HCT116 (cell line): ENCODE measurements at regions of chr2 and their contacts with region 1.

Region 1: DNA sequence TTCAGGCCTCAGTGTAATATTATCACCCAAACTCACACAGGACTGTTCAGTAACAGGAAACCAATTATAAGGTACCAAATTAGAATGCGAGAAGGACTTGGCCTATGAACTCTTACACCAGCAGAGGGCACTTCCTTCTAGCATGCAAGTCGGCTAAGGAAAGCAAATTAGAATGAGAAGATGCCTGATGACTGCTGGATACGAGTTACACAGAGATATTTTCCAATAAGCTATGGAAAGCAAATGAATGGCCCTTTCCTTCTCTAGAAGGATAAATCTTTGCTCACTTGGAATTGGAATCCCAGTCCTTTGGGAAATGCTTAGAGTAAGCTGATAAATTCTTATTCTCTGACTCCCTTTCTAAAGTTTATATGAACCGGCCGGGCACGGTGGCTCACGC is 109.8 kb downstream of the AP1S3 start:
- DNase-seq: peak; percentile 79
- ATAC-seq: peak; percentile 73
- H3K4me3 ChIP-seq: no peak overlapping the region
- H3K27ac ChIP-seq: peak overlapping the region; percentile 93
- H3K4me1 ChIP-seq: peaks cover 43 to 64% of the 10 kb centered on the region in 2 experiments
- H3K27me3 ChIP-seq: no peaks in the 10 kb centered on the region
- CTCF ChIP-seq: peak; percentile 63 to 76 (median 70); a peak in 5 of 6 replicates
- POLR2A ChIP-seq: no peak
- RAD21 ChIP-seq: peak; percentile 86

Region 2: GRCh38 chr2:223692191-223692947 is 35.2 kb before region 1 on chr2:
- CTCF ChIA-PET with region 1: no interaction called
- POLR2A ChIA-PET with region 1: interaction called, 95 read pairs
- RAD21 ChIA-PET with region 1: no interaction called
- intact Hi-C with region 1: no loop called
- DNase-seq: peak; percentile 59
- ATAC-seq: peak; percentile 85
- H3K4me3 ChIP-seq: no peak overlapping the region
- H3K27ac ChIP-seq: peak overlapping the region; percentile 4; the same call in 1 of the 2 replicates
- H3K4me1 ChIP-seq: peaks cover 34 to 51% of the 10 kb centered on the region in 2 experiments
- H3K27me3 ChIP-seq: no peaks in the 10 kb centered on the region
- CTCF ChIP-seq: peak; percentile 71 to 77 (median 72)
- POLR2A ChIP-seq: no peak
- RAD21 ChIP-seq: peak; percentile 86

Region 3: GRCh38 chr2:223712642-223713041 is 14.9 kb before region 1 on chr2:
- CTCF ChIA-PET with region 1: interaction called, 3 read pairs
- POLR2A ChIA-PET with region 1: interaction called, 15 read pairs
- RAD21 ChIA-PET with region 1: no interaction called
- intact Hi-C with region 1: no loop called
- DNase-seq: no peak
- ATAC-seq: no peak
- H3K4me3 ChIP-seq: no peak overlapping the region
- H3K27ac ChIP-seq: no peak overlapping the region
- H3K4me1 ChIP-seq: peaks cover 2 to 9% of the 10 kb centered on the region in 2 experiments; a peak in 3 of 4 replicates
- H3K27me3 ChIP-seq: no peaks in the 10 kb centered on the region
- CTCF ChIP-seq: no peak
- POLR2A ChIP-seq: no peak
- RAD21 ChIP-seq: no peak

Region 4: DNA sequence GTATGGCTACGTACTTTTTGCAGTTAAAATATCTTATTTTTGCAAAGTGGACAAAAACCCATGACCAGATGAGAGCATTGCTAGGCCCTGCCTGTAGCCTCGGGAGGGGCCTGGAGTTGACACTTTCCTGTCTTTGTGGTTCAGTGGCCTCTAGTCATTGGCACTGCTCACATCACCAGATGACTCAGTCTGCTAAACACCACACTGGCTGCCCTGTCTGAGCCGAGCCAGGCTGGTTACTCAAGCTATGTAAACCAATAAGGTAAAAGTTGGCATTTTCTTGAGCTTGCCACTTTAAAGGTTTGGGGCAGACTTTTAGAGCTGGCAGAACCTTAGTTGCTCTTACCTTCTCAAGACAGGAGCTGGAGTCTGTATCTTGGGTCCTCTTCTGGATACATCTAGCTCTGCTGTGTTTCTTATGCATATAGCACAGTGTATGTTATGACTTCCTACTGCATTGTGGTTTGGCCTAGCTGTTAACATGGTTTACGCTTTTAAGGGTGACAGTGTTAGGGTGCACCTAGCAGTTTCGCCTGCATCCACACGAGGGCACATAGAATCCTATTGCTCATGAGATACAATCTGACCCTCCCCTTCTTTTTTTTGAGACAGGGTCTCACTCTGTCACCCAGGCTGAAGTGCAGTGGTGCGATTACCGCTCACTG is 33.4 kb after region 1 on chr2:
- CTCF ChIA-PET with region 1: no interaction called
- POLR2A ChIA-PET with region 1: interaction called, 35 read pairs
- RAD21 ChIA-PET with region 1: no interaction called
- intact Hi-C with region 1: no loop called
- DNase-seq: peak; percentile 96
- ATAC-seq: peak; percentile 90
- H3K4me3 ChIP-seq: 0 out of 4 replicates have a peak overlapping the region, but pooled peaks of 1 of the 2 experiments have one; percentile 23
- H3K27ac ChIP-seq: peak overlapping the region; percentile 91
- H3K4me1 ChIP-seq: peaks cover 56 to 63% of the 10 kb centered on the region in 2 experiments
- H3K27me3 ChIP-seq: no peaks in the 10 kb centered on the region
- CTCF ChIP-seq: peak in 2 of 3 experiments; percentile 56 to 59; a peak in 4 of 6 replicates
- POLR2A ChIP-seq: no peak
- RAD21 ChIP-seq: peak; percentile 49

Region 5: DNA sequence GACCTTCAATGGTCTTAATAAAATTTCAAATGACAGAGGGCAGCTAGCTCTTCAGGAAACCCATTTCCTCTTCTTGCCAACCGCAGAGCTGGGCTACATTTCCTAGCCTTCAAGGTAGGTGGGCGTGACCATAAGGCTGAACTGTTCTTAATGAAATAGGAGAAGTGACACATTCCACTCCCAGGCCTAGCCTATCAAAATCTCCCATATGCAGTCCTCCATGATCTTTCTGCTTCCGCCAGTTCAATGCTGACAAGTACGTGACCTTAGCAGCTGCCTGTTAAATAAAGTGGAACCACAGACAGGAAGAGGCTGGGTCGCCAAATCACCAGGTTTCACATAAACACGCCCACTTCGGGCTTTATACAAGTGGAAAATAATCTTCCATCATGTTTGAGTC is 298.3 kb after region 1 on chr2:
- CTCF ChIA-PET with region 1: no interaction called
- POLR2A ChIA-PET with region 1: no interaction called
- RAD21 ChIA-PET with region 1: no interaction called
- intact Hi-C with region 1: no loop called
- DNase-seq: no peak
- ATAC-seq: no peak
- H3K4me3 ChIP-seq: no peak overlapping the region
- H3K27ac ChIP-seq: no peak overlapping the region
- H3K4me1 ChIP-seq: no peaks in the 10 kb centered on the region
- H3K27me3 ChIP-seq: no peaks in the 10 kb centered on the region
- CTCF ChIP-seq: no peak
- POLR2A ChIP-seq: no peak
- RAD21 ChIP-seq: no peak